ENCODE measurements at regions of chr15 and their contacts with region 1.

Region 1: DNA sequence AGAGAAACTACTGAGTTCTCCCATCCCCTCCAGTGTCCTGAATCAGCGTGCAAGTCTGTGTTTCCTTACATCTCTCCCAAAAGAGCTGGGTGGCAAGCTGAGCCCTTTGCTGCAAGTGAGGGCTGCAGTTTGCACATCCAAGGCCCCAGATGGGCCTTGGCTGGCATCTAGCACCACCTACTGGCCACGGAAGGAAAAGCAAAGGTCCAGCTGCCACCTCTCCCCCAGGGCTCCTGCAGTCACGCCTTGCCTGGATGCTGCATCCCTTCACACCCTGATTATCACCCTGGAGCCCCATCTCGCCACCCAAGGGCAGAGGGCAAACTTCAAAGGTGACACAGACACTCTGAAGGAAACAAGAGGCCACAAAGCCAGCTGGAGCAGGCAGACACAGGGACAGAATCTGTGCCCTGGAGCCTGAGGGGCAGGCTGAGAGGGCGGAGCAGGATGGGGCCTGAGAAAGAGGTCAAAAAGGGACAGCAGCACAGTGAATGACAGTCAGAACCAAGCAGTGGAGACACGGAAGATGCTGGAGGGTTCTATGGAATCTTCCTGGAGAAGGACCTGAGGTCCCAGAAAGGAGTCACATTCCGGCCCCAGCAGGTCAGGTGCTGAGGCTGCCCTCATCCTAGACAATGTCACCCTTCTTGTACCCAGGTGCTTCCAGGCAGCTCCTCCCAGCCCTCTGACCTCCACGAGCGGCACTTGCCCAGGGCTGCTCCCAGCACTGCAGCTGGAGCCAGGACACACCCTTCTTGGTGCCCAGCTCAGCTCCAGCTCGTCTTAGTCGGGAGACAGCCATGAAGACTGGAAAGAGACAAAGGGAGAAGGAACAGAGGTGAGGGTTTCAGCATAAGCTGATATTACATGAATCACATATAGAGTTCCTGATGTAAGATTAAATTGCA is 18.3 kb upstream of the NTRK3 start:
- DNase-seq: peak in 4 of 5 donors; percentile 12 to 41 (median 34)
- H3K4me3 ChIP-seq: no peak overlapping the region
- H3K27ac ChIP-seq: no peak overlapping the region
- H3K4me1 ChIP-seq: no peaks in the 10 kb centered on the region
- H3K27me3 ChIP-seq: no peaks in the 10 kb centered on the region
- CTCF ChIP-seq: peak in 1 of 3 donors; percentile 33
- EP300 ChIP-seq: no peak
- POLR2A ChIP-seq: no peak

Region 2: DNA sequence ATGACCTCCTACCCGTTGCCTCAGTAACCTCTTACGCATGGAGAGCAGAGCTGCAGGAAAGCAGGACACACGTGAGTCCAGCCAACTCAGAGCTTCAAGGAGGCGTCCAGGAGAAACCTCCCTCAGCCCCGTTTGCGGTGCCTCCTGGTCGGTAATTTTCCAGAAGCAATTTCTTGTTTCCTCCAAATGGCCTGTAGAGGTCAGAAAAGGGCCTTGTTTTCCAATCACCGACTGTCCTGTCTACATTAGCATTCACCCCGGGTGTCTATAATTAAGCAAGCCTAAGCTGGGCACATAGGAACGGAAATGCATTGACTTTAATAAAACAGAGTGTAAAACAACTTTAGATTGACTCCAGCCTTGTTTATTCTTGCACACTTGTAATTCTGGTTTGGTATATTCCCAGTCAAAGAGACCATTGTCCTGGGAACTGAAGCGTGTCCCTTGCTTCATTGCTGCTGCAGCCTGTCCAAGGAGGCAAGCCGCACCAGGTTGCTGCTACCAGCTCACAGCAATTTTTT is 1358.9 kb before region 1 on chr15:
- intact Hi-C with region 1: loop called in 1 of 4 experiments (anchors 10 kb)
- DNase-seq: no peak
- H3K4me3 ChIP-seq: no peak overlapping the region
- H3K27ac ChIP-seq: no peak overlapping the region
- H3K4me1 ChIP-seq: no peaks in the 10 kb centered on the region
- H3K27me3 ChIP-seq: no peaks in the 10 kb centered on the region
- CTCF ChIP-seq: no peak
- EP300 ChIP-seq: no peak
- POLR2A ChIP-seq: no peak

Region 3: GRCh38 chr15:88546248-88547129 is 271.7 kb after region 1 on chr15 and contains the start of gene DET1:
- intact Hi-C with region 1: no loop called
- DNase-seq: peak; percentile 89 to 93 (median 90)
- H3K4me3 ChIP-seq: peak within 1 kb of the TSS; percentile 91
- H3K27ac ChIP-seq: peak within 1 kb of the TSS; percentile 35 to 78
- H3K4me1 ChIP-seq: peaks cover 14% of the 10 kb centered on the region
- H3K27me3 ChIP-seq: no peaks in the 10 kb centered on the region
- CTCF ChIP-seq: peak; percentile 67 to 75 (median 67)
- EP300 ChIP-seq: no peak
- POLR2A ChIP-seq: no peak
- total RNA-seq, gene DET1: 10.0 to 22.8 (median 17.6) TPM

Region 4: GRCh38 chr15:88791637-88792036 is 516.8 kb after region 1 on chr15:
- intact Hi-C with region 1: no loop called
- DNase-seq: no peak
- H3K4me3 ChIP-seq: no peak overlapping the region
- H3K27ac ChIP-seq: no peak overlapping the region
- H3K4me1 ChIP-seq: no peaks in the 10 kb centered on the region
- H3K27me3 ChIP-seq: no peaks in the 10 kb centered on the region
- CTCF ChIP-seq: no peak
- EP300 ChIP-seq: no peak
- POLR2A ChIP-seq: no peak

Measured in ovary (tissue), 10 donors.